ENCODE measurements at regions of chr7 and their contacts with region 1.

Region 1: DNA sequence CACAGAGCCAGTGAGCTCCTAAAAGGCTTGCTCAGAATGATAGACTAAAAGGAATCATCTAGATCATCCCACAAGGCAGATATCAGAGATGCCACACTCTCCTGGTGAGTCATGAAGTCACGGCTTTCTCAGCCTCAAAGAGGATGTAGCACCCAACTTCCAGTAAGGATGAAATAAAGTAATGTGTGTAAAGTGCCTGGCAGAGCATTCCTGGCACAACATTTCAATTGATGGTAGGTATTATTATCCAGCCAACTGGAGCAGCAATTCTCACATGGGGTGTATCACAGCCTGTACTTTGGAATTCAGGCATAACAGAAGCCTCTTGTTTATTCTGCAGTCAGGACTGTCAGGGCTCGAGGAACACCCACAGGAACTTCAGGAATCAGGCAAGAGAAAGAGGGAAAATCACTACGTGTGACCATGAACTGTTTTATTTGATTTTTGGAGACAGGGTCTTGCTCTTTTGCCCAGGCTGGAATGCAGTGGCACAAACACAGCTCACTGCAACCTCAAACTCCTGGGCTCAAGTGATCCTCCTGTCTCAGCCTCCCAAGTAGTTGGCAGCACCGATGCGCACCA is 5.3 kb upstream of the NAT16 start:
- DNase-seq: no peak
- ATAC-seq: no peak
- H3K4me3 Mint-ChIP-seq: no peak overlapping the region
- H3K27ac Mint-ChIP-seq: no peak overlapping the region
- H3K4me1 Mint-ChIP-seq: peaks cover 3% of the 10 kb centered on the region
- H3K27me3 Mint-ChIP-seq: peaks cover 22% of the 10 kb centered on the region
- CTCF ChIP-seq: no peak

Region 2: DNA sequence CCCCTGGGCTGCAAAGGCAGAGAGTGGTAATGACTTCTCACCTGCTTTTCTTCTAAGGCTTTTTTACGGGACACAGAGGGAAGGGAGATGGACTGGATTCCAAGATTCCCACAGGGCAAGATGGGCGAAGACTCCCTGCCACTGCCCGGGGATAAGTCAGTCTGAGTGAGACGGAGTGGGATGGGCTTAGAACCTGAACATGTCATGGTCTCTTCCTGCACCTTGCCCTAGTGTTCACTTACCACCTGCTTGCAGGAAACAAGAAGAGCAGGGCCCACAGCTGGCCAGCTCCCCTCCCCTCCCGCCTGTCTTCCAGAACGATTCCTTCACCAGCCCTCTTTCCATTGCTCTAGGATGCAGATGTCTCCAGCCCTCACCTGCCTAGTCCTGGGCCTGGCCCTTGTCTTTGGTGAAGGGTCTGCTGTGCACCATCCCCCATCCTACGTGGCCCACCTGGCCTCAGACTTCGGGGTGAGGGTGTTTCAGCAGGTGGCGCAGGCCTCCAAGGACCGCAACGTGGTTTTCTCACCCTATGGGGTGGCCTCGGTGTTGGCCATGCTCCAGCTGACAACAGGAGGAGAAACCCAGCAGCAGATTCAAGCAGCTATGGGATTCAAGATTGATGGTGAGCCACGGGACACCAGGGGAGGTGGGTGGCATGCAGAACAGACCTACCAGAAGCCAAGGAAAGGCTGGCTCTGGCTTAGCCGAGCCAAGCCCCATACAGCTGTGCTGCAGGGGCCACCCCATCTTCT is 57.1 kb before region 1 on chr7:
- CTCF ChIA-PET with region 1: no interaction called
- POLR2A ChIA-PET with region 1: no interaction called
- intact Hi-C with region 1: no loop called
- DNase-seq: no peak
- ATAC-seq: no peak
- H3K4me3 Mint-ChIP-seq: no peak overlapping the region
- H3K27ac Mint-ChIP-seq: no peak overlapping the region
- H3K4me1 Mint-ChIP-seq: peaks cover 27% of the 10 kb centered on the region
- H3K27me3 Mint-ChIP-seq: peaks cover 49% of the 10 kb centered on the region
- CTCF ChIP-seq: no peak

Region 3: DNA sequence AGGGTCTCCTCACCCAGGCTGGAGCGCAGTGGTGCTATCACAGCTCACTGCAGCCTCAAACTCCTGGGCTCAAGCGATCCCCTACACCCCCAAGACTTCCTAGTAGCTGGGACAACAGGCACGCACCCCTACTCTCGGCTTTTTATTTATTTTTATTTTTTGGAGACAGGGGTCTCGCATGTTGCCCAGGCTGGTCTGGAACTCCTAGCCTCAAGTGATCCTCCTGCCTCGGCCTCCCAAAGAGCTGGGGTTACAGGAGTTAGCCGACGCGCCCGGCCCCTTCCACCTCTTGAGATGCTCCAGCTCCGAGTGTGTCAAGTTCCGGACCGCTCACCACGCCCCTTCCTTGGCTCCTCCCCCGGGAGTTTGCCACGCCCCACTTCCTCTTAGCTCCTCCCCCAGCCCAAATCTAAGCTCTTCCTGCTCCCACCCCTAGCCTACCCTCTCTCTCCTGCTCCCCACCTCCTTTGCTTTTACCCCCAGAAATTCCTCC is 11.6 kb before region 1 on chr7:
- CTCF ChIA-PET with region 1: interaction called, 56 read pairs
- POLR2A ChIA-PET with region 1: interaction called, 5 read pairs
- intact Hi-C with region 1: no loop called
- DNase-seq: peak; percentile 82
- ATAC-seq: peak; percentile 89
- H3K4me3 Mint-ChIP-seq: peak overlapping the region; percentile 54
- H3K27ac Mint-ChIP-seq: no peak overlapping the region
- H3K4me1 Mint-ChIP-seq: peaks cover 45% of the 10 kb centered on the region
- H3K27me3 Mint-ChIP-seq: peaks cover 74% of the 10 kb centered on the region
- CTCF ChIP-seq: no peak

Region 4: GRCh38 chr7:101201695-101202604 is 16.6 kb after region 1 on chr7:
- CTCF ChIA-PET with region 1: no interaction called
- POLR2A ChIA-PET with region 1: no interaction called
- intact Hi-C with region 1: no loop called
- DNase-seq: no peak
- ATAC-seq: no peak
- H3K4me3 Mint-ChIP-seq: no peak overlapping the region
- H3K27ac Mint-ChIP-seq: no peak overlapping the region
- H3K4me1 Mint-ChIP-seq: peaks cover 2% of the 10 kb centered on the region
- H3K27me3 Mint-ChIP-seq: peaks cover 27% of the 10 kb centered on the region
- CTCF ChIP-seq: no peak

Region 5: DNA sequence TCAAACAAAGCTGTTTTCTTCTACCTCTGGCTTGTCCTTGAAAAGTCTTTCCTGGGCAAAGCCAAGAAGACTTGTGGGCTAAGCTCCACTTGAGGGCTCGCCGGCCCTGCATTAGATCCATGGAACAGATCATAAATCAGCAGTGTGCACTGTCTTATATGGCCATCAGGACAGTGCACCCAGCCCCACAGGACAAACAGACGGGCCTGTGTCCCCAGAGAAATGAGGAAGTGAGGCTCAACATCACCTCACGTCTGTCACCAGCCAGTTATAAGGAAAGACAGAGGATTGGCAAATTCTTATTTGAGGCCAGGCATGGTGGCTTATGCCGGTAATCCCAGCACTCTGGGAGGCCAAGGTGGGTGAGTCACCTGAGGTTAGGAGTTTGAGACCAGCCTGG is 148.6 kb after region 1 on chr7:
- CTCF ChIA-PET with region 1: no interaction called
- POLR2A ChIA-PET with region 1: no interaction called
- intact Hi-C with region 1: no loop called
- DNase-seq: no peak
- ATAC-seq: no peak
- H3K4me3 Mint-ChIP-seq: no peak overlapping the region
- H3K27ac Mint-ChIP-seq: no peak overlapping the region
- H3K4me1 Mint-ChIP-seq: no peaks in the 10 kb centered on the region
- H3K27me3 Mint-ChIP-seq: peaks cover 2% of the 10 kb centered on the region
- CTCF ChIP-seq: no peak

Region 6: DNA sequence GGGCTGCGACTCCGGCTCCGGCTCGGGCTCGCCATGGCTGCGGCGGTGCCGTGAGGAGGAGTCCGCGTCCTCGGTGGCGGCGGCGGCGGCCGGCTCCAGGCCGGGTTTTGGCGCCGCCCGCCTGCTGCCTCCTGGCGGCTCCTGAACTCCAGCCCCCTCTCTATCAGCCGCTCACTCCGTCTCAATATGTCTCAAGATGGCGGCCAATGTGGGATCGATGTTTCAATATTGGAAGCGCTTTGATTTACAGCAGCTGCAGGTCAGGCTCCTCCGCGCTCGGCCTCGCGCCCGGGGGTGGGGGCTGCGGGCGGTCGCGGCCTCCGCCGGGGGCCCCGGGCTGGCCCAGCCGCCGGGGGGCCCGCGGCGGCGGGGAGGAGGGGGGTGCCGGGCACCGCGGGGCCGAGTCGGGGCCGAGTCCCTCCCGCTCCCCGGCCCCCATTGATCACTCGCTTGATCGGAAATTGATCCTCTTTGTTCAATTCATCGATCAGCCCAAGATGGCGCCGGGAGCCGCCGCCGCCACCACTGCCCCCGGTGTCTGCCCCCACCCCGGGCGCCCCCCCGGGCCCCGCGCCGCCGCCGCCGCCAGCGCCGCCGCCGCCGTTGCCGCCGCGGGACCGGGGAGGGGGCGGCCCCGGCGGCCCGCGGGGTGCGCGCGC is 630.6 kb after region 1 on chr7:
- CTCF ChIA-PET with region 1: no interaction called
- POLR2A ChIA-PET with region 1: no interaction called
- intact Hi-C with region 1: no loop called
- DNase-seq: peak; percentile 76
- ATAC-seq: peak; percentile 78
- H3K4me3 Mint-ChIP-seq: peak overlapping the region; percentile 75
- H3K27ac Mint-ChIP-seq: peak overlapping the region; percentile 83
- H3K4me1 Mint-ChIP-seq: peaks cover 24% of the 10 kb centered on the region
- H3K27me3 Mint-ChIP-seq: no peaks in the 10 kb centered on the region
- CTCF ChIP-seq: no peak